Left ventricle myocardium inferior (tissue), 1 donor: ENCODE measurements at regions of chr9 and their contacts with region 1.

Region 1: GRCh38 chr9:79651251-79651795 is 79.6 kb downstream of the TLE4 start:
- DNase-seq: no peak
- H3K4me3 ChIP-seq: no peak overlapping the region
- H3K27ac ChIP-seq: no peak overlapping the region
- H3K4me1 ChIP-seq: peaks cover 6% of the 10 kb centered on the region
- H3K27me3 ChIP-seq: no peaks in the 10 kb centered on the region
- CTCF ChIP-seq: no peak

Region 2: GRCh38 chr9:79571309-79572031 is 79.9 kb before region 1 on chr9 and contains the start of gene TLE4:
- intact Hi-C with region 1: no loop called
- DNase-seq: peak; percentile 100
- H3K4me3 ChIP-seq: peak within 1 kb of the TSS; percentile 97
- H3K27ac ChIP-seq: peak within 1 kb of the TSS; percentile 93
- H3K4me1 ChIP-seq: peaks cover 50% of the 10 kb centered on the region
- H3K27me3 ChIP-seq: peaks cover 14% of the 10 kb centered on the region
- CTCF ChIP-seq: no peak
- total RNA-seq, gene TLE4: 10.3 TPM

Region 3: GRCh38 chr9:79592726-79593493 is 58.4 kb before region 1 on chr9:
- intact Hi-C with region 1: loop called (anchors 10 kb)
- DNase-seq: no peak
- H3K4me3 ChIP-seq: no peak overlapping the region
- H3K27ac ChIP-seq: no peak overlapping the region
- H3K4me1 ChIP-seq: peaks cover 8% of the 10 kb centered on the region
- H3K27me3 ChIP-seq: no peaks in the 10 kb centered on the region
- CTCF ChIP-seq: no peak